ENCODE measurements at regions of chr2 and their contacts with region 1.

Region 1: DNA sequence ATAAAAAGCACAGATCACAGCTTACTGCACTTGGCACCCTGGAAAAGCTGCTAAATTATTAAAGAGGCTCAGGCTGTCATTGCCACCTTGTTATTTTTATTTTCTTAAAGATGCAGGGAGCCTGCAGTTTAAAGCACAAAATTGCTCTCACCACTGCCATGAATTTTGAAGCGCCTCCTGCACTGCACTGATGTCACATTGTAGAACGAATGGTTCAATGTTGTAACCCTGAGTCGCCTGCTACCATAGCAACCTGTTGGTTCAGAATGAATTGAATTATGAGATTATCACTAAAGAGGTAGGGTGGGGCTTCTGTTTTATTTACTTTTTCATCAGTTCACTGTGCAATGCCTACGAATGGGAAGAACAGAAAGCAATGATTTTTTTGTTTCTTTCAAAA is 16.5 kb downstream of the SCG2 start:
- DNase-seq: no peak
- H3K4me3 ChIP-seq: no peak overlapping the region
- H3K27ac ChIP-seq: no peak overlapping the region
- H3K4me1 ChIP-seq: peaks cover 7% of the 10 kb centered on the region
- H3K27me3 ChIP-seq: no peaks in the 10 kb centered on the region
- CTCF ChIP-seq: no peak
- POLR2A ChIP-seq: no peak

Region 2: DNA sequence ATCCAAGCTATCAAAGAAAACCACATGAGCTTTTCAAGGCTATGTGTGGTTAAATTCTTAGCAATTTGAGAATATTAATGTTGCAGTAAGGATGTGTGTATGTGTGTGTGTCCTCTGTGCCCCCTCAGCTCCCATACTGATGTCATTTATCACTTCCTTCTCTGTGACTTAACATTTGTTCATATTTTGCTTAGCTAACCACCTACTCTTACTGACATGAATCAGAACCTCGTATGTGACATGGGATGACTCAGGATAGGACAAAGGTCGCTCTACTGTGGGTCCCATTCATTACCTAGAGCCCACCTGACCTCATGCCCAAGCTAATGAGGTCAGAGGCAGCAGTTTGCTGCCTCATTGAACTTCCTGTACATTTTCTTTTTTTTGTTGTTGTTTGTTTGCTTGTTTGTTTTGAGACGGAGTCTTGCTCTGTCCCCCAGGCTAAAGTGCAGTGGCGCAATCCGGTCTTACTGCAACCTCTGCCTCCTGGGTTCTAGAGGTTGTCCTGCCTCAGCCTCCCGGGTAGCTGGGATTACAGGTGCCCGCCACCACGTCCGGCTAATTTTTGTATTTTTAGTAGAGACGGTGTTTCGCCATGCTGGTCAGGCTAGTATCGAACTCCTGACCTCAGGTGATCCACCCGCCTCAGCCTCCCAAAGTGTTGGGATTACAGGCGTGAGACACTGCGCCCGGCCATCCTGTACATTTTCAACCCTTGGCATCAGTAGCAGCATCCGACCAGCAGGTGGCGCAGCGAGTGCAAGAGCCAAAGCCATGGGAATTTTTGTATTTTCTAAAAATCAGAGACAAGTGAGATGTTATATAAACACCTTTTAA is 877.8 kb before region 1 on chr2:
- intact Hi-C with region 1: no loop called
- DNase-seq: no peak
- H3K4me3 ChIP-seq: no peak overlapping the region
- H3K27ac ChIP-seq: no peak overlapping the region
- H3K4me1 ChIP-seq: peaks cover 16% of the 10 kb centered on the region
- H3K27me3 ChIP-seq: no peaks in the 10 kb centered on the region
- CTCF ChIP-seq: peak; percentile 48 to 93 (median 86)
- POLR2A ChIP-seq: no peak

Region 3: GRCh38 chr2:223501641-223502040 is 84.0 kb before region 1 on chr2:
- intact Hi-C with region 1: loop called (anchors 2 kb)
- DNase-seq: no peak
- H3K4me3 ChIP-seq: no peak overlapping the region
- H3K27ac ChIP-seq: no peak overlapping the region
- H3K4me1 ChIP-seq: no peaks in the 10 kb centered on the region
- H3K27me3 ChIP-seq: no peaks in the 10 kb centered on the region
- CTCF ChIP-seq: no peak
- POLR2A ChIP-seq: no peak

Measured in vagina (tissue), 2 donors.